ENCODE measurements at regions of chr14 and their contacts with region 1.

Region 1: DNA sequence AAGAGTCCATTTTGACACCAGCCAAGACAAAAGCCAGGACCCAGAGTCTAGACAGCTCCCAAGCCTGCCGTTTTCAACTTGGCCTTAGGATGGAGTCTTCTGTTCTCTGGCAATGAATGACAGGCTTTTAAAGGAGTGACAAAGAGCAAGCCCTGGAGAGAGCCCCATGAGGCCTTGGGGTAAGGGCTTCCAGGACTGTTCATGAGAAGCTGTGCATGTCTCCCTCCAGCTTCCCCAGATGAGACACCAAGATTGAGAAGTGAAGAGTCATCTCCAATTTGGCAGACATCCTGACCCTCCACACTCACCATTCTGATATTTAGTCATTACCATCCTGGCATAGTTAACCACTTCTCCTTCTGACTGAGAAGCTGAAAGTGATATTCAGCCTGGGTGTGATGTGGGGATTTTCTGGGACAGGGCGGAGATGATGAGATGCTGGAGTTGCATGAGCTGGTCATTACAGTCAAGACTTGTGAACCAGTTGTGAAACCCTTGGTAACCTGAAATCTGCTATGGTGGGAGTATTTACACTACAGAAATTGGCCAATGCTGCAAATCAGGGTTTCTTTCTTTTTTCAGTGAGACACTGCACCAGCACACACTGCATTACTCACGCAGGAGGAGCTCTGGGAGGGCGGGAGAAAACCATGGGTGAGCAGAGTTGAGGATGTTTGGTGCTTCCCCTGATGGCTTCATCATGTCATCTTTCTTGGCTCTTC is 77.8 kb downstream of the VCPKMT start:
- DNase-seq: peak; percentile 92
- H3K4me3 Mint-ChIP-seq: peak overlapping the region; percentile 16
- H3K27ac Mint-ChIP-seq: peak overlapping the region; percentile 91
- H3K4me1 Mint-ChIP-seq: peaks cover 46% of the 10 kb centered on the region
- H3K27me3 Mint-ChIP-seq: no peaks in the 10 kb centered on the region

Region 2: DNA sequence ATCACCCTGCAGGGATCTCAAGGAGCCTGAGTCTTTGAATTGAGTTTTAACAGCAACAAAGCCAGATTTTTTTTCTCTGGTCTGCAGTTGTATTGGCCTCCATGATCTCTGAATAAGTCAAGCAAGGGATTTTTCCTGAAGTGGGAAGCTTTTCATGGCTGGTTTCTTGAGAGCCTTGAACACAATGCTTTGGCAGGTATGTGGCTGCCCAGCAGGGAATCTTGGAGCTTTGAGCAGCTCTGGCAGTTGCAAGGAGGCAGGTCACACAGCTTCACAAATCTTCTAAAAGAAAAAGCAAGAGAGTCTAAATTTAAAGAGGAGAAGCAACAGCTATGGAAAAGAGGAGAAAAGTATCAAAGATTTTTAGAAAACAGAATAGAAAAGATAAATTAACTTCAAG is 512.5 kb before region 1 on chr14:
- CTCF ChIA-PET with region 1: no interaction called
- intact Hi-C with region 1: no loop called
- DNase-seq: no peak
- H3K4me3 Mint-ChIP-seq: no peak overlapping the region
- H3K27ac Mint-ChIP-seq: no peak overlapping the region
- H3K4me1 Mint-ChIP-seq: no peaks in the 10 kb centered on the region
- H3K27me3 Mint-ChIP-seq: peaks cover 3% of the 10 kb centered on the region

Region 3: DNA sequence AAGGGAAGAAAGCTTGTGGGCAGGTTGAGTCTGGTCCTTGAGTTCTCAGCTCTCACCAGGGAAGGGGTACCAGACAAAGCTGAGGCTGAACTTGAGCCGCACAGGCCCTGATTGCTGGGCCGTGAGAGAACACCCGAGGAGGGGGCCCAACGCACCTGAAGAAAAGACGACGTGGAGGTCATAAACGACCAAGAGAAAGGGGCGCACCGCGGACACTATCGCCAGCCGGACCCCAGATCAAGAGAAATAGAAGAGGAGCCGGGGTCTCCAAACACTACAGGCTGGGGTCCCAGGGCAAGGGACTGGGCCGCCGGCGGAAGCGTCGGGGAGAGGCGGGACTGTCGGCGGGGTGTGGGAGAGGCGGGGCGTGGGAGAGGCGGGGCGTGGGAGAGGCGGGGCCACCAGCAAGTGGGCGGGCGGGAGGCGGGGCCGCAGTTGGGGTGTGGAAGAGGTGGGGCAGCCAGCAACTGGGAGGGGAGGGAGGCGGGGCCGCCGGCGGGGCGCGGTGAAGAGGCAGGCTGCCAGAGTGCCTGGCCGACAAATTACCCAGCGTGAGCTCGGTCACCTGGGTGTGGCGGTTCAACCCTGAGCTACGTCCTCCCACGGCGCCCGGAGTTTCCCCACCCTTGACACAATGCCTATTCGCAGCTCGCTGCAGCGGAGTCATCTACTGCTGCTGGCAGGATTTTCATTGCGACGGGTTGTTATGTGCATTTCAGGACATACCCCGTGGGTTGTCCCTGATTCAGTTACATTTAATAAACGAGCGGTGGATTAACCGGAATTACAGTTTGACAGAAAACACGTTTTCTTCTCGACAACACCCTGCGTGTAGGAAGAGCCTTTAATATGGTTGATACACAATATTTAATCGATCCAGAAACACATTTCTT is 170.5 kb before region 1 on chr14:
- CTCF ChIA-PET with region 1: interaction called, 22 read pairs
- intact Hi-C with region 1: loop called (anchors 1 kb)
- DNase-seq: peak; percentile 99
- H3K4me3 Mint-ChIP-seq: peak overlapping the region; percentile 92
- H3K27ac Mint-ChIP-seq: peak overlapping the region; percentile 94
- H3K4me1 Mint-ChIP-seq: peaks cover 20% of the 10 kb centered on the region
- H3K27me3 Mint-ChIP-seq: no peaks in the 10 kb centered on the region

Region 4: DNA sequence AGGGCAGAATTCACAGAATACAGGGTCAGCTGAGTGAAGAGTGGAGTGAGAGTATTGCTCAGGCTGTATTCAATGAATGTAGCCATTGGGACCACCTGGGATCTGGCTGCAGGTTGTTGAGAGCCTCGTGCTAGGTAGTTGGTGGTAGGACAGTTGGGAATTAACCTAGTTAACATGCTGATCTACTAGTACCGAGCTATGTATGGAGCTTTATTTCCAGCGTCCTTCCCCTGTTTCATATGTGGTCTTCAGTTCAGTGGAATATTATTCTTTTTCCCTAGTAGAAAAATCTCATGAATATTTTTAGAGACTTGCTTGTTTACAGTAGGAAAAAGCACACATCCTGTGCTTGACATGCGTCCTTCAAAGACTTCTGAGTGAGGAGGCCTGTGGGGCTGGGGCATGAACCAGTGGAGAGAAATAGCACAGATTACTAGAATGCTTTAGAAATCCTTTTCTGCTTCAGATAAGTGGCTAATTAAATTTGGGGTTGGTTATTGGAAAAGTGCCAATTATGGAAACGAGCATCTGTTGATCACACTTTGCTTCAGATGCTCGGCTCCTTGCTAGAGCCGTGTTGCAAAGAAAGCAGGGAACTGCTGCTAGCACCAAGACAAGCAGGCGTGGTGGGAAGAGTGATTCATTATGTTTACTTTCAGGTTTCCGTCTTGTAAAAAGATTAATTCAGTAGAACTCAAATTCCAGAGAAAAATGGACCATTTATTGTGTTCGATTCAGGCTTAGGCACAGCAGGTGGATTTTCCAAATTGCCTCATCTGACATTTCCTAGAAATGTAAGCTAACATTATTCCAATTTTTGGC is 92.0 kb before region 1 on chr14:
- CTCF ChIA-PET with region 1: interaction called, 4 read pairs
- intact Hi-C with region 1: loop called (anchors 1 kb)
- DNase-seq: peak; percentile 51
- H3K4me3 Mint-ChIP-seq: peak overlapping the region; percentile 44
- H3K27ac Mint-ChIP-seq: peak overlapping the region; percentile 62
- H3K4me1 Mint-ChIP-seq: peaks cover 64% of the 10 kb centered on the region
- H3K27me3 Mint-ChIP-seq: no peaks in the 10 kb centered on the region

Region 5: GRCh38 chr14:49986340-49987014 is 52.1 kb before region 1 on chr14:
- CTCF ChIA-PET with region 1: interaction called, 3 read pairs
- intact Hi-C with region 1: loop called (anchors 1 kb)
- DNase-seq: no peak
- H3K4me3 Mint-ChIP-seq: no peak overlapping the region
- H3K27ac Mint-ChIP-seq: peak overlapping the region; percentile 34
- H3K4me1 Mint-ChIP-seq: peaks cover 40% of the 10 kb centered on the region
- H3K27me3 Mint-ChIP-seq: no peaks in the 10 kb centered on the region

Region 6: GRCh38 chr14:50060871-50061663 is 22.5 kb after region 1 on chr14:
- CTCF ChIA-PET with region 1: interaction called, 22 read pairs
- intact Hi-C with region 1: loop called (anchors 1 kb)
- DNase-seq: peak; percentile 64
- H3K4me3 Mint-ChIP-seq: peak overlapping the region; percentile 85
- H3K27ac Mint-ChIP-seq: peak overlapping the region; percentile 98
- H3K4me1 Mint-ChIP-seq: peaks cover 75% of the 10 kb centered on the region
- H3K27me3 Mint-ChIP-seq: no peaks in the 10 kb centered on the region

Region 7: DNA sequence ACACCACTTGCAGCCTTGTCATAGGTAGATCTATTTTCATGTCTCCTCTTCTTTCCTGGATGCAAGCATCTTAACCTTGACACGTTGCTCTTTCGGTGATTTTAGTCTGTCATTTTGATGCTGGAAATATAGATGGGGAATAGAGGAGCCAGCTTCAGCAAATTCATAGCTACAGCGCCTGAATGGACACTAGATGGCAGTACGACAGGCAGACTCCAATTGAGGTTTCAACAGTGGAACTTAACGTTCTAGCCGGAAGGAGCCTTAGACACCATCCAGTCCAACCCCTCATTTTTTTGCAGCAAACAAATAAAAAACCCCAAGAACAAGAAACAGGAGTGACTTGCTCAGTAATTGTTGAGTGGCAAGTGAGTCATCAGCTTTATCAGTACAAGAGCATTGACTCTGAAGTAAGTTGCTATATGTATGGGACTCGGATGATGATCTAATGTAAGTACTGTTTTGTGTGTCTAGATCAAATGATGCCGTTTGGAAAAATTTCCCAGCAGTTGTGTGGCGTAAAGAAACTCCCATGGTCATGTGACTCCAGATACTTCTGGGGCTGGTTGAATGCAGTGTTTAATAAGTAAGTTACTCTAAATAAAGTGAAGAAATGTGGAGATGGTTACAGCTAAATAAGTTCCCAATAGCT is 282.6 kb after region 1 on chr14:
- CTCF ChIA-PET with region 1: interaction called, 3 read pairs
- intact Hi-C with region 1: loop called (anchors 1 kb)
- DNase-seq: peak; percentile 80
- H3K4me3 Mint-ChIP-seq: no peak overlapping the region
- H3K27ac Mint-ChIP-seq: no peak overlapping the region
- H3K4me1 Mint-ChIP-seq: peaks cover 25% of the 10 kb centered on the region
- H3K27me3 Mint-ChIP-seq: no peaks in the 10 kb centered on the region

Region 8: GRCh38 chr14:50813544-50813863 is 774.9 kb after region 1 on chr14:
- CTCF ChIA-PET with region 1: no interaction called
- intact Hi-C with region 1: no loop called
- DNase-seq: peak; percentile 45
- H3K4me3 Mint-ChIP-seq: peak overlapping the region; percentile 75
- H3K27ac Mint-ChIP-seq: peak overlapping the region; percentile 98
- H3K4me1 Mint-ChIP-seq: peaks cover 55% of the 10 kb centered on the region
- H3K27me3 Mint-ChIP-seq: no peaks in the 10 kb centered on the region